Dorsolateral prefrontal cortex (tissue), 120 donors: ENCODE measurements at regions of chr17 and their contacts with region 1.

Region 1: GRCh38 chr17:73261952-73262675 is 434 bp upstream of the CPSF4L start:
- DNase-seq: peak in 9 of 10 donors; percentile 59 to 81 (median 72)
- H3K4me3 ChIP-seq: peak overlapping the region in 23 of 59 donors; percentile 0 to 46 (median 17)
- H3K27ac ChIP-seq: peak overlapping the region in 44 of 59 donors; percentile 8 to 79 (median 56)
- H3K27me3 ChIP-seq: no peaks in the 10 kb centered on the region
- CTCF ChIP-seq: peak in 6 of 56 donors; percentile 14 to 29 (median 16)

Region 2: DNA sequence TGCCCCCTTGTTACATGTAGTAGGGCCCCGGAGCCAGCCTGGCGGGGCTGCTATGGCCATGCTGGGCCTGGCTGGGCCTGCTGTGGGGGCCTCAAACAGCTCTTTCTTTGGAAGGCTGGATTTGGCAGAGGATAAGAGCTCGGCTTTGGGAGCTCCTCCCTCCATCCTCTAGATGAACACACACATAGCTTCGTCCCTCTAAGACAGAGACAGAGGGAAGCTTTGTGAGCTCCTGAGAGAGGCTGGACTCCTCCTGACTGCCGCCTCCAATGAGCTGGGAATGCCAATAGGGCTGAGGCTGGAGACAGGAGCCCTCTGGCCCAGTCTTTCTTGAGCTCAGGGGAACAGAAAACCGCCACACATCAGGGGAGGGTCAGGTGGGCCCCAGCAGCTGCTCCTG is 87.0 kb after region 1 on chr17:
- intact Hi-C with region 1: loop called in 1 of 2 experiments (anchors 5 kb)
- DNase-seq: peak in 6 of 10 donors; percentile 52 to 70 (median 66)
- H3K4me3 ChIP-seq: peak overlapping the region in 1 of 59 donors; percentile 16
- H3K27ac ChIP-seq: peak overlapping the region; percentile 22 to 91 (median 79)
- H3K27me3 ChIP-seq: no peaks in the 10 kb centered on the region
- CTCF ChIP-seq: peak in 1 of 56 donors; percentile 17